Caco-2 (cell line): ENCODE measurements at regions of chr12 and their contacts with region 1.

Region 1: DNA sequence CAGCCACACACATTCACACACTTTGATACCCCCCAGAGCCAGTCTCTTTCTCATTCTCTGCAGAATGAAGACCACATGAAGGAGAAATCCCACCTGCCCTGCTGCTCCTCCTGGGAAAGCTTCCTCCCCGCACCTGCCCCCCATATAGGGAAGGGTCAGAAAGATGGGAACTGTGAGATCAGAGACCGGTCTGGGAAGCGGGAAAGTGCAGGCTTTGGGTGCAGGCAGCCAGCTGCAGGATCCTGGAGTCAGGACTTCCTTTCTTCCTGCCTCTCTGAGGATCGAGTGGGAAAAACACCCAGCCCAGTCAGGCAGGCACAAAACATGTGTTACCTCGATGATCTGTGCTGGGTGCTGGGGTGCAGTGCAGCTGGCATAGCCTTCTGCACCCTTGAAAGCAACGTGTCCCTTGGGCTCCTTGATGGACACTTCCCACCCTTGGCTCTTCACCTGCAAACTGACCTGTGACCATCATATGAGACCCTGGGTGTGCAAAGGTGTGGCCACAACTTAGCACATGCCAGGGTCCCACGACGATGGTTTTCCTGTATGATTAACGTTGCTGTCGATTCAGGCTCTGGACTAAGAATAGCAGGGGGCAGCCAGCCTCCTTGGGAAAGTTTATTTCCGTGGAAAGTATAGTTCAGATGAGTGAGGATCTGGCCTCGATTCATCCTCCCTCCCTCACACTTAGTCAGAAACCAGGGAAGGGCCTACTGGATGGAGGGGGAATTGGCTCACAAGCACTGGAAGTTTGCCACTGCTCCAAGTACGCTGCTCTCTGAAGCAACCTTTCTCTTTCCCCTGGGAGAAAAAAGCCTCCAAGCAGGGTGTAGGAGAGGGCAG is 105.4 kb upstream of the MED13L start:
- DNase-seq: no peak
- H3K4me3 ChIP-seq: no peak overlapping the region
- H3K4me3 Mint-ChIP-seq: peak overlapping the region; percentile 55
- H3K27ac Mint-ChIP-seq: peak overlapping the region; percentile 78
- H3K4me1 ChIP-seq: peaks cover 56% of the 10 kb centered on the region
- H3K4me1 Mint-ChIP-seq: peaks cover 26% of the 10 kb centered on the region
- H3K27me3 ChIP-seq: no peaks in the 10 kb centered on the region
- H3K27me3 Mint-ChIP-seq: no peaks in the 10 kb centered on the region
- CTCF ChIP-seq: no peak

Region 2: GRCh38 chr12:116368196-116369194 is 14.4 kb before region 1 on chr12:
- CTCF ChIA-PET with region 1: no interaction called
- POLR2A ChIA-PET with region 1: no interaction called
- intact Hi-C with region 1: loop called (anchors 1 kb)
- DNase-seq: peak; percentile 92 to 96
- H3K4me3 ChIP-seq: no peak overlapping the region
- H3K4me3 Mint-ChIP-seq: peak overlapping the region; percentile 56
- H3K27ac Mint-ChIP-seq: peak overlapping the region; percentile 90
- H3K4me1 ChIP-seq: peaks cover 65% of the 10 kb centered on the region
- H3K4me1 Mint-ChIP-seq: peaks cover 32% of the 10 kb centered on the region
- H3K27me3 ChIP-seq: no peaks in the 10 kb centered on the region
- H3K27me3 Mint-ChIP-seq: no peaks in the 10 kb centered on the region
- CTCF ChIP-seq: no peak

Region 3: DNA sequence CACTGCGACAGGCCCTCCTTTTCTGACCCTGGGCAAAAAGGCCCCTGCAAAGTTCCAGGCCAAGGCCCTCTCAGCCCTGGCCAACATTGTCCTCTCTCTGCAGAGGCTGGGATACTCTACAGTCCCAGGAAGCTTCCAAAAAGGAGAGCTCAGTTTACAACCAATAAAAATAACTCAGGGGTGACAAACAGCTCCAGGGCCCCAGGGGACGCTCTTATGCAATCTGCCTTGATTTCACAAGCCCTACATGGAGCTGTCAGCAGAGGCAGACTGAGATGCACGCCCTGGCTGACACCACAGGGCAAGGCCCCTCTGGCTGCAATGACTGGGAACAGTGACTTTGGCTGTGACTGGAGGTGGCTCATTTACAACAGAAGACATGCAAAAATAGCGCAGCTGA is 23.6 kb after region 1 on chr12:
- CTCF ChIA-PET with region 1: no interaction called
- POLR2A ChIA-PET with region 1: interaction called, 4 read pairs
- intact Hi-C with region 1: loop called (anchors 2 kb)
- DNase-seq: peak; percentile 89 to 94
- H3K4me3 ChIP-seq: no peak overlapping the region
- H3K4me3 Mint-ChIP-seq: no peak overlapping the region
- H3K27ac Mint-ChIP-seq: peak overlapping the region; percentile 63
- H3K4me1 ChIP-seq: peaks cover 12% of the 10 kb centered on the region
- H3K4me1 Mint-ChIP-seq: peaks cover 19% of the 10 kb centered on the region
- H3K27me3 ChIP-seq: no peaks in the 10 kb centered on the region
- H3K27me3 Mint-ChIP-seq: no peaks in the 10 kb centered on the region
- CTCF ChIP-seq: no peak